ENCODE measurements at regions of chr6 and their contacts with region 1.

Region 1: GRCh38 chr6:125749173-125749864 is at the start of gene HEY2:
- DNase-seq: peak; percentile 95 to 98
- ATAC-seq: peak; percentile 95
- H3K4me3 ChIP-seq: peak within 1 kb of the TSS; percentile 90 to 93
- H3K27ac ChIP-seq: peak within 1 kb of the TSS; percentile 92 to 100
- H3K4me1 ChIP-seq: peaks cover 0 to 3% of the 10 kb centered on the region in 2 donors
- H3K27me3 ChIP-seq: no peaks in the 10 kb centered on the region
- total RNA-seq, gene HEY2: 19.1 to 23.9 TPM

Region 2: DNA sequence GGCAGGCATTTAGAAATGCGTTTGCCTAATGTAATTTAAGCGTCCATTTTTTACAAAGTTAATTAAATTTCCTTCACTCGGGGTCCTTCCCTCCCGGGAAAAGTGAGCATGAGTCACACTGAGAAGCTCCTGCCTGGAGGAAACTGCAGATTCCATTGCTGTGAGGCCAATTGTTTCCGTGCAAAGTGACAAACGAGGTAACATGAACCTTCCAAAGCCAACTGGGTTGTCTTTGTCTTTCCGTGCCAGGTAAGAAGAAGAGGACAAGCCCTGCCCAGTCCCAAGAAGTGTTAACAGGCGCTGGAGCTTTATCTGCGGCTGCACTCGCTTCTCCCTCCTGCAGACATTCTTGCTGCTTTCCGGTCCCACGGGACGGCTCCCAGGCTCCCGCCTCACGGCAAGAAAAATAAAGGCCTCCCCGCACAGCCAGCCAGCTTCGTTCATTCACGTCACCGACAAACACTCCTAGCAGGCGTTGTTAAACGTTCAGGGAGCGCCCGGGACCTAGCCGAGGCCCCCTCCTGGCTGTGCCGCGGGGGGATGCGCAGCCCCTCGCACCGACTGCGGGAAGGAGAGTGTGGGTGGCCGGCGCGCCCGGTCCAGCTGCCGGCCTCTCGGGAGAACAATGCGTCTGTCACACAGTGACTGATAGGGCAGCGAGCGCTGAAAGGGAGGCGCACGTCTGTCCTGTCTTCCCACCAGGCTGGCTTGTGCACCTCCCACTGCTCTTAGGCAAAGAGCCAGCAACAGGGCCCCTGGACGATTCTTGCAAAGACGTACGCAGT is 386.1 kb before region 1 on chr6:
- intact Hi-C with region 1: loop called in 1 of 2 experiments (anchors 5 kb)
- DNase-seq: peak; percentile 77 to 87
- ATAC-seq: peak; percentile 85
- H3K4me3 ChIP-seq: peak overlapping the region; percentile 28 to 44
- H3K27ac ChIP-seq: peak overlapping the region; percentile 37 to 88
- H3K4me1 ChIP-seq: peaks cover 3 to 8% of the 10 kb centered on the region in 2 donors
- H3K27me3 ChIP-seq: no peaks in the 10 kb centered on the region

Region 3: GRCh38 chr6:125444006-125444923 is 305.1 kb before region 1 on chr6:
- intact Hi-C with region 1: loop called (anchors 5 to 10 kb)
- DNase-seq: peak; percentile 87 to 88
- ATAC-seq: peak; percentile 89
- H3K4me3 ChIP-seq: peak overlapping the region; percentile 47 to 67
- H3K27ac ChIP-seq: peak overlapping the region; percentile 96 to 99
- H3K4me1 ChIP-seq: peaks cover 0 to 20% of the 10 kb centered on the region in 2 donors
- H3K27me3 ChIP-seq: no peaks in the 10 kb centered on the region

Region 4: DNA sequence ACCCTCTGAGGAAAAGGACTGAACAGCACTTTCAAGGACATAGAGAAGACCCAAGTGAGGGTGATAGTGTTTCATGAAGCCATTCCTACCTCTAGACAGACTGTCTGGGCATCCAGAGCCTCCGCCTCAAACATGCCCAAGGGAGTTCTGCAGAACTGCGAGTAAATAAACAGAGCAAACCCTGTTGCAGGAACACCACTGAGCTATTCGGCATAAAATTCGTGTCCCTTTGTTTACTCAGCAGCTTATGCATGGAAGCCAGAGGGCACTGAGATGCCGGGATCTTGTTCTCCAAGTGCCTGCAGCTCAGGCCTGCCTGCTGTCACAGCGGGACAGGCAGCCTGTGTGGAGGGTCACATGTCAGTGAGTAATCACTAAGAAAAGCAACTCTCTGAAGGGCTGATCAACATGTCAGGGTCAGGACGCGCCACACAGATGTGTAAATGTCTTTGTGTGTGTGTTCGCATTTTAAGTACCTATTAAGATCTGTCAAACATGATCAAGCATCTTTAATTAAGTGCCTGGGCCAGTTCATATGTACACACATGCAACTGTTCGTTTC is 164.8 kb before region 1 on chr6:
- intact Hi-C with region 1: loop called in 1 of 2 experiments (anchors 10 kb)
- DNase-seq: peak in 1 of 2 donors; percentile 60
- ATAC-seq: peak; percentile 66
- H3K4me3 ChIP-seq: no peak overlapping the region
- H3K27ac ChIP-seq: peak overlapping the region in 1 of 2 donors; percentile 71
- H3K4me1 ChIP-seq: peaks cover 0 to 3% of the 10 kb centered on the region in 2 donors
- H3K27me3 ChIP-seq: no peaks in the 10 kb centered on the region

Region 5: DNA sequence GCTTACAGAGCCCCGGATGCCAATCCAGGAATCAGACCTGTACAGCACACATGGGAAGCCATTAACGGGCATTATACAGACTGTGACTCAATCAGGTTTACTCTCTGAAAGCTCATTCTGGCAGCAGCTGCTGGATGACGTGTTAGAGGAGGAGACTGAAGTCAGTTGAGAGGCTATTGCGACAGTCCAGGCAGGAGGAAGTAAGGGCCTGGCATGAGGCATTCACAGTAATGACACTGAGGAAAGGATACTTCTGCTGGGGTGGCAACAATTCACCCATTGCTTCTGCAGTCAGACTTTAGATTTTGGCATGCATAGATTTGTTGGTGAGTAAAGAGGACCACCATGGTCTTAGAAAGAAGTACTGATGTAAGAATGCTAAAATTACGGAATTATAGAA is 150.9 kb before region 1 on chr6:
- intact Hi-C with region 1: loop called in 1 of 2 experiments (anchors 10 kb)
- DNase-seq: peak; percentile 87 to 91
- ATAC-seq: peak; percentile 82
- H3K4me3 ChIP-seq: no peak overlapping the region
- H3K27ac ChIP-seq: no peak overlapping the region
- H3K4me1 ChIP-seq: no peaks in the 10 kb centered on the region
- H3K27me3 ChIP-seq: no peaks in the 10 kb centered on the region

Region 6: GRCh38 chr6:125611573-125612344 is 137.6 kb before region 1 on chr6:
- intact Hi-C with region 1: loop called in 1 of 2 experiments (anchors 5 kb)
- DNase-seq: peak in 1 of 2 donors; percentile 51
- ATAC-seq: peak; percentile 91
- H3K4me3 ChIP-seq: peak overlapping the region in 1 of 2 donors; percentile 38
- H3K27ac ChIP-seq: peak overlapping the region; percentile 38 to 68
- H3K4me1 ChIP-seq: no peaks in the 10 kb centered on the region
- H3K27me3 ChIP-seq: no peaks in the 10 kb centered on the region

Region 7: GRCh38 chr6:125670568-125670967 is 78.8 kb before region 1 on chr6:
- intact Hi-C with region 1: loop called in 1 of 2 experiments (anchors 2 kb)
- DNase-seq: peak; percentile 34 to 45
- ATAC-seq: peak; percentile 55
- H3K4me3 ChIP-seq: no peak overlapping the region
- H3K27ac ChIP-seq: peak overlapping the region; percentile 49 to 93
- H3K4me1 ChIP-seq: peaks cover 4 to 11% of the 10 kb centered on the region in 2 donors
- H3K27me3 ChIP-seq: no peaks in the 10 kb centered on the region